ENCODE measurements at regions of chr4 and their contacts with region 1.

Region 1: GRCh38 chr4:100189820-100190642 is at the start of gene DDIT4L:
- DNase-seq: peak; percentile 42
- H3K4me3 ChIP-seq: peak within 1 kb of the TSS; percentile 61 to 69 (median 63)
- H3K27ac ChIP-seq: no peak within 1 kb of the TSS
- H3K4me1 ChIP-seq: peaks cover 3% of the 10 kb centered on the region
- H3K27me3 ChIP-seq: no peaks in the 10 kb centered on the region
- CTCF ChIP-seq: no peak
- POLR2A ChIP-seq: no peak
- total RNA-seq, gene DDIT4L: 1.4 and 2.0 TPM in 2 replicates

Region 2: DNA sequence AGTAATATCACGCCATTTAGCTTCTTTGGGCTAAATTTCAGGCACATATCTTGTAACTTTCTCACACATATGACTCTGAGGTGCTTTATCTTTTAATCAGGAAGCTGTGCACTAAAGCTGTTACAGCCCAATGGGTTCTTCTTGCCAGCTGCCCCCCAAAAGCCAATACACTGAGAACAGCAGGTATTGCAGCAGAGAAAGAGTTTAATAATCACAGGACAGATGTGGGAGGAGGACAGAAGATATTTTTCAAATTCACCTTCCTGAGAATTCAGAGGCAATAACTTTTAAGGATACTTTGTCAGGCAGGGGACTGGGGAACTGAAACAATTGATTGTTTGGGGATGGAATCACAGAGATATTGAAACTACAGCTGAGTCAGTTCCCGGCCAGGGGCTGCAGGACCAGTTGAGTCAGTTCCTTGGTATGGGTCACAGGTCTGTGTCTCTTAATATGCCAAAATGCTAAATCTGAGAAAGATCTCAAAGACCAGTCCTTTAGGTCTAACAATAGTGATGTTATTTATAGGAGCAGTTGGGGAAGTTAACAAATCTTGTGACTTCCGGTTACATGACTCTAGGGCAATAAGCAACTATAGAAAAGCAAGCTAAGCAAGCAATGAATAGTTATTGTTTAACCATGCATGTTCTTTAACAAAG is 27.9 kb before region 1 on chr4:
- CTCF ChIA-PET with region 1: no interaction called
- POLR2A ChIA-PET with region 1: no interaction called
- dilution Hi-C with region 1: no loop called
- intact Hi-C with region 1: loop called (anchors 1 kb)
- DNase-seq: peak; percentile 19
- H3K4me3 ChIP-seq: no peak overlapping the region
- H3K27ac ChIP-seq: no peak overlapping the region
- H3K4me1 ChIP-seq: no peaks in the 10 kb centered on the region
- H3K27me3 ChIP-seq: no peaks in the 10 kb centered on the region
- CTCF ChIP-seq: no peak
- POLR2A ChIP-seq: no peak

Region 3: DNA sequence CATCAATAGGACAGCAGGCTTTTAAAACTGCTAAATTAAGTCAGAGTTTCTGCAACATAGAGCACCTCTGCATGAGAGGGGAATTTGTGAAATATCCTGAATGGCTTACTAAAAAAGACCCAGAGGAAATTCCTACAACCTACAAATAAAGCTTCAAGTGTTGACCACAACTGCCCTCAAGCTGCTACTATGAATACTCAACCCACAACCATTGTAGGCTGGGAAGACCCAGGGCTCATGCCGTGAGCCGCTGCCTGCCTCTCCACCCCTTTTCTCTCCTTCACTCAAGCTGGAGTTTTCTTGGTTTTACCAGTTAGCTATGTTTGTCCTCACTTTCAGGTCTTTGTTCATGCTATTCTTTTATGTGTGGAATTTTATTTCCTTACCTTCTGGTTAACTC is 176.2 kb after region 1 on chr4:
- CTCF ChIA-PET with region 1: no interaction called
- POLR2A ChIA-PET with region 1: no interaction called
- dilution Hi-C with region 1: no loop called
- intact Hi-C with region 1: loop called (anchors 10 kb)
- DNase-seq: no peak
- H3K4me3 ChIP-seq: no peak overlapping the region
- H3K27ac ChIP-seq: no peak overlapping the region
- H3K4me1 ChIP-seq: peaks cover 14% of the 10 kb centered on the region
- H3K27me3 ChIP-seq: no peaks in the 10 kb centered on the region
- CTCF ChIP-seq: no peak
- POLR2A ChIP-seq: no peak